ENCODE measurements at regions of chr3 and their contacts with region 1.

Region 1: DNA sequence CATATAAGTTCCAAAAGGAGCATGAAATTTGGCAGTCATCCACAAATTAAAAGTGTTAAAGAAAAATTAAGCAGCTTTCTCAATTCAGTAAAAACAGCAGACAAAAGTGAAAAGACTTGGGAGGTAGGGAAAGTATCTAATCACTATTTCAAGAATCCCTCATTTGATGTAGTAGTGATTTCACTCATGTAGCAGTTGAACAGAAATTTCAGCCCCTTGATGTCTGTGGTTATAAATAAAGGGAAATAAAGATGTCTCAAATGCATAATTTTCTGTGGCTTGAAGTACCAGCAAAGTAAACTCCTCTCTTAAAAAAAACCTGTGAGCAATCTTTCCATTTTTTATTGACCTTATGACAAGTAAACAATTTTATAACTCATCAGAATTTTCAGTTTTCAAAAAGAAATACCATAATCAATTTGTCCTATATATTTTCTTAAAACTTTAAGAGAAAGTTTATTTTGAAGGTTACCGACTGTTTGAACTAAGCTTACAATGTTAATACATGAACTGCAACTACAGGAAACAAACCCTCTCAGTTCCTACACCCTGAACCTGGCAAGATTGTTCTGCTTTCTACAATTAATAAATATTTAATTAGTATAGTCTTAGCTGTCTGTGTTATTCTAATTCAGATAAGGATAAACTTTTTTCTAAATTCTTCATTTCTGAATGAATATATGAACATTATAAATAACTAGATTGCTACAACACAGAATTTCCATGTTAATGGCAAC is 94.2 kb downstream of the CBLB start:
- DNase-seq: no peak
- ATAC-seq: peak; percentile 49
- H3K4me3 ChIP-seq: no peak overlapping the region
- H3K27ac ChIP-seq: no peak overlapping the region
- H3K4me1 ChIP-seq: peaks cover 9% of the 10 kb centered on the region; the same call in 1 of the 2 replicates
- H3K27me3 ChIP-seq: no peaks in the 10 kb centered on the region
- CTCF ChIP-seq: no peak
- EP300 ChIP-seq: no peak
- POLR2A ChIP-seq: no peak
- RAD21 ChIP-seq: 0 out of 2 replicates have a peak, but pooled peaks have one; percentile 4

Region 2: GRCh38 chr3:105747060-105747541 is 27.5 kb before region 1 on chr3:
- CTCF ChIA-PET with region 1: no interaction called
- POLR2A ChIA-PET with region 1: no interaction called
- RAD21 ChIA-PET with region 1: no interaction called
- SMC1A ChIA-PET with region 1: no interaction called
- in situ Hi-C with region 1: no loop called
- intact Hi-C with region 1: no loop called
- DNase-seq: no peak
- ATAC-seq: peak; percentile 47
- H3K4me3 ChIP-seq: no peak overlapping the region
- H3K27ac ChIP-seq: no peak overlapping the region
- H3K4me1 ChIP-seq: no peaks in the 10 kb centered on the region
- H3K27me3 ChIP-seq: no peaks in the 10 kb centered on the region
- CTCF ChIP-seq: no peak
- EP300 ChIP-seq: no peak
- POLR2A ChIP-seq: no peak
- RAD21 ChIP-seq: no peak

Region 3: DNA sequence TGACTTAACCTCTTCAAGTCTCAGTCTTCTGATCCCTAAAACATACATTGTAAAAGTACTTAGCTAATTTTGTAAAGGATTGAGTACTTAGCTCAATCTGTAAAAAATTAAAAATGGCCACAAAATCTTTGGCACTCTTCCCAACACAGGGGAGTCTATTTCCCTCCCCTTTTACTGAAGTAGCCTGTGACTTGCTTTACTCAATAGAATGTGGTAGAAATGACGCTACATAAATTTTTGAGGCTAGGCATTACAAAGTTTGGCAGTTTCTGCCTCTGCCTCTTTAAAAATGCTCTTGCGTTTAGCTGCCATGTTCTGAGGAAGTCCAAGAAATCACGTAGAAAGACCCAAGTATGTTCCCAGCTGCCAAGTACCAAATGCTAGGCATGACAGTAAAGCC is 14.0 kb after region 1 on chr3:
- CTCF ChIA-PET with region 1: interaction called, 4 read pairs
- POLR2A ChIA-PET with region 1: interaction called, 4 read pairs
- RAD21 ChIA-PET with region 1: no interaction called
- SMC1A ChIA-PET with region 1: interaction called, 11 read pairs
- in situ Hi-C with region 1: no loop called
- intact Hi-C with region 1: no loop called
- DNase-seq: no peak
- ATAC-seq: no peak
- H3K4me3 ChIP-seq: no peak overlapping the region
- H3K27ac ChIP-seq: no peak overlapping the region
- H3K4me1 ChIP-seq: no peaks in the 10 kb centered on the region
- H3K27me3 ChIP-seq: no peaks in the 10 kb centered on the region
- CTCF ChIP-seq: no peak
- EP300 ChIP-seq: no peak
- POLR2A ChIP-seq: no peak
- RAD21 ChIP-seq: no peak